Cardiac septum (tissue), 1 donor: ENCODE measurements at regions of chr3 and their contacts with region 1.

Region 1: DNA sequence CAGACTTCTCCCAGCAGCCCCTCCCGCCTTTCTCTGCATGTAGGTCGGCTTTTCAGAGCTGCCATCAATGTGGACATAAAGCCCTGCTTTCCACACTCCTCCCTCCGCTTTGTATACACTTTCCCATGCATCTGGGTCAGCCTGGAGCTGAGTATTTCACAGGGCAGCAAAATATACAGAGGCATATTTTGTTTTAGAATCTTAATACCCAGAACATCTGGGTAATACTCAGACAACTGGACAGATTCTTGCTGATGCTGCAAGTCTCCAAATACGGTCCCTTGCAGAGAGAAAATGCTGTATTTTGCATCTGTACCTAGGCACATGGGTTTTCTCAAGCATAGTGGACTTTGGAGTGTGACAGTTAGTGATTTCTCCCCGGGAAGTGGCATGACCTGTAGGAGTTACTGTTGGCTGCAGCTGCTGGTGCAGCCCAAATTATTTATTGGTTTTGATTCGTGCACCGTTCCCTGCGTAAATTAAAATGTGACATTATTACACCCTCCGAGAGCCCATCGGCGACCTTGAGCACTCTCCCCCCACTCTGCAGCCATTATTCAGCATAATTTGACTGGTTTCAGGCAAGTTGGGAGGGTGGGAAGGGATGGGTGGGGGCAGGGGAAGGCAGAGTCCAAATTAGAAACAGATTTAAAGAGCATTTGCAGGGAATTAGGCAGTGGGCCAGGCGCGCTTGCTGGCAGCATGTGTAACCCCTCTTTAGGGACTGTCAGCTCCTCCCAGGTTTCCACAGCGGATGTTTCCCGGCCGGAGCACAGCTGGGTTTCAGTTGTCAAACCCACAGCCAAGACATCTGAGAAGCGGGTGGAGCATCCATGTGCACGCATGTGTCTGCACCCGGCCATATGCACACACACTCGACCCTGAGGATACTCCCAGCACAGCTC is 100.8 kb downstream of the CPN2 start:
- DNase-seq: peak; percentile 81

Region 2: GRCh38 chr3:193971261-193971751 is 279.0 kb before region 1 on chr3:
- intact Hi-C with region 1: no loop called
- DNase-seq: no peak

Region 3: GRCh38 chr3:194141415-194142155 is 108.8 kb before region 1 on chr3:
- intact Hi-C with region 1: loop called (anchors 5 kb)
- DNase-seq: peak; percentile 94